Ascending aorta (tissue), 2 donors: ENCODE measurements at regions of chr7 and their contacts with region 1.

Region 1: GRCh38 chr7:82859106-82859850 is 303.4 kb downstream of the PCLO start:
- DNase-seq: no peak
- H3K4me3 ChIP-seq: no peak overlapping the region
- H3K27ac ChIP-seq: no peak overlapping the region
- H3K4me1 ChIP-seq: no peaks in the 10 kb centered on the region
- H3K27me3 ChIP-seq: no peaks in the 10 kb centered on the region
- CTCF ChIP-seq: no peak

Region 2: DNA sequence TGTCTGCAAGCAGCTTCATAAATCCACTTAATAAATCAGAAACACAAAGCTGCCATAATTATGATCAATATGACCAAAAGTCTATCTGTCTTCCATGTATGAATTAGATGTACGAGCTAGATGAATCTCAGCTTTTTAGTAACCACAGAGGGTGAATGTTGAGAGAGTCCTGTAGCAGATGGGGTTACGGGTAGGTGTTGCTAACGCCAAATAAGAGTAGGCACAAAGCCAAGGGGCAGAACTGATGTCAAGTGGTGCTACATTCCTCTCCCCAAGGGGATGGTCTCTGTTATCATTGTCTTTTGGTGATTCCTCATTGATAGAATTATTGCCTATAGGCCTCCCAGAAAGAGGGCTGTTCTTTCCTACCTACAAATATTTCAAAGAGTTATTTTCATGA is 45.6 kb after region 1 on chr7:
- intact Hi-C with region 1: loop called (anchors 10 kb)
- DNase-seq: no peak
- H3K4me3 ChIP-seq: no peak overlapping the region
- H3K27ac ChIP-seq: no peak overlapping the region
- H3K4me1 ChIP-seq: no peaks in the 10 kb centered on the region
- H3K27me3 ChIP-seq: no peaks in the 10 kb centered on the region
- CTCF ChIP-seq: no peak